Psoas muscle (tissue), 8 donors: ENCODE measurements at regions of chr4 and their contacts with region 1.

Region 1: GRCh38 chr4:373062-373839 is 35.6 kb downstream of the ZNF141 start:
- DNase-seq: no peak
- ATAC-seq: no peak
- H3K4me3 ChIP-seq: no peak overlapping the region
- H3K27ac ChIP-seq: no peak overlapping the region
- H3K4me1 ChIP-seq: no peaks in the 10 kb centered on the region
- H3K27me3 ChIP-seq: no peaks in the 10 kb centered on the region
- CTCF ChIP-seq: no peak

Region 2: DNA sequence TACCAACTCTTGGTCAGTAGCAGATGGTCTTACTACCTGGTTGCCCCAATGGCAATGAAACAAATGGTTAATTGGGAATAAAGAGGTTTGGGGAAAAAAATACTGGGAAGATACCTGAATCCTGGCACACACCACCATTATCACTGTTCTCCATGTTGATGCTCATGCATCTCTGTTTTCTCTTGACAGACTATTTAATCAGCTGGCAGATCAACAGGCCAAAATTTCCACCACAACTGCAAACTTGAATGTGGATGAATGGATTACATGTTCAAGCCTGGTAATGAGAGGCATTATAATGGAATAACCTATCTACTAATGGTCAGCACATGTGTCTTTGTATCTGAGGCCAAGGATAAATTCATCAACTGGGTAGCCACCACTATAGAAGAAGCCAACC is 80.0 kb after region 1 on chr4:
- intact Hi-C with region 1: loop called in 1 of 2 experiments (anchors 10 kb)
- DNase-seq: no peak
- ATAC-seq: no peak
- H3K4me3 ChIP-seq: no peak overlapping the region
- H3K27ac ChIP-seq: no peak overlapping the region
- H3K4me1 ChIP-seq: no peaks in the 10 kb centered on the region
- H3K27me3 ChIP-seq: no peaks in the 10 kb centered on the region
- CTCF ChIP-seq: no peak